GM10248 (cell line): ENCODE measurements at regions of chr10 and their contacts with region 1.

Region 1: GRCh38 chr10:15222511-15222910 is 54.0 kb upstream of the NMT2 start:
- DNase-seq: no peak
- CTCF ChIP-seq: no peak

Region 2: GRCh38 chr10:15209827-15210509 is 12.5 kb before region 1 on chr10:
- CTCF ChIA-PET with region 1: interaction called, 10 read pairs
- POLR2A ChIA-PET with region 1: no interaction called
- DNase-seq: peak; percentile 78
- CTCF ChIP-seq: peak; percentile 93

Region 3: GRCh38 chr10:15244635-15245197 is 22.2 kb after region 1 on chr10:
- CTCF ChIA-PET with region 1: no interaction called
- POLR2A ChIA-PET with region 1: no interaction called
- DNase-seq: no peak
- CTCF ChIP-seq: no peak

Region 4: DNA sequence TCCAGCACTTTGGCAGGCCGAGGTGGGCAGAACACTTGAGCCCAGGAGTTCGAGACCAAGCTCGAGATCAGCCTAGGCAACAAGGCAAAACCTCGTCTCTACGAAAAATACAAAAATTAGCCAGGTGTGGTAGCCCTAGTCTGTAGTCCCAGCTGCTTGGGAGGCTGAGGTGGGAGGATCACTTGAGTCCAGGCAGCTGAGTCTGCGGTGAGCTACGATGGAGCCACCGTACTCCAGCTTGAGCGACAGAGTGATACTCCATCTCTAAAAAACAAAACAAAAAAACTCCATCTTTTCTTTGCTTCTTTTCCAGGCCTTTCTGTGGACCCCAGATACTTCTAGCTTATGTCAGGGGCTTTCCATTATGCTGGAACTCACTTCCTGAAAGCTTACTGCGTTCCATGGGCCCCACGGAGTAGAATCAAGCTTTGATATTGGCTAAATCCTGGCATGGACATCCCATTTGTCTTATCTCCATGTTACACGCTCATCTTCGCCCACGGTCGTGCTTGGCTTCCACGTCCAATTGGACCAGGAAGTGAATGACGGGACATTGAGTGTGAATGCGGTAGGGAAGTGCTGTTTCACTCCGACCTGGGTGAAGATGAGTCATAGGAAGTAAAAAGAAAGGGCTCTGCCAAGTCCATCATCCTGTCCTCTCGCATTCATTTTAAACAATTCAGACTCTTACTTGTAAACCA is 102.9 kb after region 1 on chr10:
- CTCF ChIA-PET with region 1: no interaction called
- POLR2A ChIA-PET with region 1: no interaction called
- DNase-seq: no peak
- CTCF ChIP-seq: no peak